K562 (cell line): ENCODE measurements at regions of chr11 and their contacts with region 1.

Region 1: DNA sequence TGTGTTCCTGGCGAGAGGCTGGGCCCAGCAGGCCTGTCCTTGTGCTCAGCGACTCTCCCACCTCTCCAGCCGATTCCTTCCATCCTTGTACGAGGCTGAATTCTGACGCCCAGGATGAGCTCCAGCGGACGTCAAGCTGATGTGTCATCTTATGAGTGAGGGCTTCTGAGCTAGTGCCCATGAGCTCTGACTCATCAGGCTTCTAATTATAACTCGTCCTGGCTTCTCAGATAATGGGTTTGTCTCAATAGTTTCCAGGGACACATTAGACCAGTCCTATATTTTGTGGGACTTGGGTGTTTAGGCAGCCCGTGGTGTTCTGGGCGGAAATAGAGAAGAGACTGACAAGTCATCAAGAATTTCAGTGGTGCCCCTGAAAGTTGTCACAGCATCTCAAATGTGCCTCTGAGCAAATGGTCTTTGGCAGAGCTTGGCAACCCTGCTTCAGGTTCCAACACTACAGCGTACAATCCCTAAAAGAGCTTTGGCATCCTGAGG is 108.2 kb upstream of the CD44 start:
- DNase-seq: peak; percentile 54 to 91 (median 69)
- ATAC-seq: peak; percentile 95
- H3K4me3 ChIP-seq: no peak overlapping the region; the same call in 1 of the 2 replicates
- H3K27ac ChIP-seq: peak overlapping the region; percentile 81
- H3K4me1 ChIP-seq: peaks cover 8 to 49% of the 10 kb centered on the region in 2 experiments
- H3K27me3 ChIP-seq: no peaks in the 10 kb centered on the region
- CTCF ChIP-seq: no peak
- EP300 ChIP-seq: peak; percentile 90
- POLR2A ChIP-seq: no peak; the same call in 1 of the 2 replicates
- RAD21 ChIP-seq: no peak

Region 2: GRCh38 chr11:35073691-35074419 is 43.1 kb after region 1 on chr11:
- CTCF ChIA-PET with region 1: no interaction called
- POLR2A ChIA-PET with region 1: no interaction called
- in situ Hi-C with region 1: no loop called
- intact Hi-C with region 1: loop called (anchors 5 kb)
- DNase-seq: peak in 1 of 4 experiments; percentile 22
- ATAC-seq: peak; percentile 50; the same call in 2 of the 3 replicates
- H3K4me3 ChIP-seq: no peak overlapping the region
- H3K27ac ChIP-seq: no peak overlapping the region
- H3K4me1 ChIP-seq: peaks cover 0 to 10% of the 10 kb centered on the region in 2 experiments; a peak in 2 of 5 replicates
- H3K27me3 ChIP-seq: no peaks in the 10 kb centered on the region
- CTCF ChIP-seq: no peak
- EP300 ChIP-seq: no peak
- POLR2A ChIP-seq: no peak
- RAD21 ChIP-seq: no peak